Activated T-helper 1 cell treated with anti-CD3 and anti-CD28 coated beads, Interleukin-12 subunit alpha, Interleukin-12 subunit beta, Interleukin-2, Interleukin-4 antibody, amounts not matched to agents 30 ng/mL and 10 ng/mL and 1 ng/mL, durations not matched to agents 14 hours and 24 hours and 36 hours (primary cell): ENCODE measurements at regions of chr9 and their contacts with region 1.

Region 1: DNA sequence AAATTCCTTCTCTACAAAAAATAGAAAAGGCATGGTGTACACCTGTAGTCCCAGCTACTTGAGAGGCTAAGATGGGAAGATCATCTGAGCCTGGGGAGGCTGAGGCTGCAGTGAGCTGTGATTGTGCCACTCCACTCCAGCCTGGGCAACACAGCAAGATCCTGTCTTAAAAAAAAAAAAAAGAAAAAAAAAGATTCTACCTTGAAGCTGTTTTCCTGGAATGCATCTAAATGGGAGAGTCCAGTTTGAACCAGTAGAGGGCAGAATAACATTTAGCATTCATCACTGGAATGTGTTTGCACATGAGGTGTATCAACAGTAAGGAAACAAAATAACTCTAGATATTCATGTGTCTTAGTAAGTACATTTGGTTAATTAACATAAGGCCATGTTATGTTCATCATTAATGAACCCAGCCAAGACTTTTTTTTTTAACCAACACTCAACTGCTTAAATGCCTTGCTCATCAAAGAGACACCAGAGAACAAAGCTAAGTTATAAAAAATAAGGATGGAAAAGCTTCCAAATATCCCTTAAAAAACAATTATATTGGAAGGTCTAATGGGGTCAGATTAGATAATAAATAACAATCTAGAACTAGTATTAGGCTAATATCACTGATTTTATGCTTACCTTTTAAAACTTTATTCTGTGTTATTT is 16.1 kb downstream of the IFNE start:
- DNase-seq: peak; percentile 10
- H3K4me3 Mint-ChIP-seq: no peak overlapping the region
- H3K27ac Mint-ChIP-seq: no peak overlapping the region
- H3K4me1 Mint-ChIP-seq: no peaks in the 10 kb centered on the region
- H3K27me3 Mint-ChIP-seq: peaks cover 34% of the 10 kb centered on the region

Region 2: DNA sequence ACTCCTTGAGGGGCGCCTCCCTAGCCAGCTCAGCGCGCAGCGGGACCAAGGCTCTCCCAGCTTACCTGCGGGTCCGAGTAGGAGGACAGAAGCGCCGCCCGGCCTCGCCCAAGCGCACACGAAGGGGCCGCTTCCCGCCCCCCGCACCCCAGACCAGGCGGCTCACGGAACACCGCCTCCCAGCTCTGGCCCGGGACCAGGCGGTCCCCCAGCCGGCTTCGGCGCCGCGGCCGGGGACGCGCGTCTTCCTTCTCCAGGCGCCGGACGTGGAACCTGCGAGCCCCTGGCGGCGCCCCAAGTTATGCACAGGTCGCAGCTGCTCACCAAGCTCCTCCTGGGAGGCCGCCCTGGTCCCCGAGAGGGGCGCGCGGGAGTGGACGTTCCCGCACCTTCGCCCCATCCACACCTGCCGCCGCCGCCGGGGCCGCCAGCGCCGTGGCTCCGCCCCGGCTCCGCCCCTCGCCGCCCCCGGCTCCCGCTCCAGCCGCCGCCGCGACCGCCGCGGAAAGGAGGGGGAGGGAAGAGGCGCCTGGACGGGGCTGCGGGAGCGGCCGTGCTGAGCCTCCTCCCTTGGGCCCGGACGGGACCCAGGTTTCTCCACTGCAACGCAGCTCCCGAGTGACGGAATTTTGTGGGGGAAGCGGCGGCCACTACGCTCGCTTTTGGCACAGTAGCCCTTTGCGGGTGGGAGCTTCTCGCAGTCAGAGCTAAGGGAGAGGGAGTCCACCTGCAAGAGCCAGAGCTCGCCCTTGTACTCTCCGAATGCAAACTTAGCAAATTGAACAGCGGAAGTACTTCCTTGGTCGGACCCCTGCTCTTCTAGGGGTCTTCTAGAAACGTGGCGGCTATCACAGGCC is 93.7 kb after region 1 on chr9:
- intact Hi-C with region 1: loop called (anchors 1 kb)
- DNase-seq: peak; percentile 16
- H3K4me3 Mint-ChIP-seq: peak overlapping the region; percentile 85
- H3K27ac Mint-ChIP-seq: no peak overlapping the region
- H3K4me1 Mint-ChIP-seq: peaks cover 17% of the 10 kb centered on the region
- H3K27me3 Mint-ChIP-seq: peaks cover 56% of the 10 kb centered on the region